GM10248 (cell line): ENCODE measurements at regions of chr4 and their contacts with region 1.

Region 1: GRCh38 chr4:54318904-54319303 is 89.8 kb downstream of the PDGFRA start:
- DNase-seq: peak; percentile 36
- CTCF ChIP-seq: peak; percentile 77

Region 2: GRCh38 chr4:53777244-53777984 is 541.5 kb before region 1 on chr4:
- CTCF ChIA-PET with region 1: no interaction called
- POLR2A ChIA-PET with region 1: no interaction called
- DNase-seq: no peak
- CTCF ChIP-seq: no peak

Region 3: GRCh38 chr4:54032558-54033135 is 286.3 kb before region 1 on chr4:
- CTCF ChIA-PET with region 1: no interaction called
- POLR2A ChIA-PET with region 1: no interaction called
- DNase-seq: no peak
- CTCF ChIP-seq: no peak

Region 4: GRCh38 chr4:54308110-54308509 is 10.8 kb before region 1 on chr4:
- CTCF ChIA-PET with region 1: interaction called, 16 read pairs
- POLR2A ChIA-PET with region 1: no interaction called
- DNase-seq: no peak
- CTCF ChIP-seq: no peak

Region 5: GRCh38 chr4:54330896-54331295 is 12.0 kb after region 1 on chr4:
- CTCF ChIA-PET with region 1: interaction called, 21 read pairs
- POLR2A ChIA-PET with region 1: no interaction called
- DNase-seq: no peak
- CTCF ChIP-seq: no peak